ENCODE measurements at regions of chr2 and their contacts with region 1.

Region 1: DNA sequence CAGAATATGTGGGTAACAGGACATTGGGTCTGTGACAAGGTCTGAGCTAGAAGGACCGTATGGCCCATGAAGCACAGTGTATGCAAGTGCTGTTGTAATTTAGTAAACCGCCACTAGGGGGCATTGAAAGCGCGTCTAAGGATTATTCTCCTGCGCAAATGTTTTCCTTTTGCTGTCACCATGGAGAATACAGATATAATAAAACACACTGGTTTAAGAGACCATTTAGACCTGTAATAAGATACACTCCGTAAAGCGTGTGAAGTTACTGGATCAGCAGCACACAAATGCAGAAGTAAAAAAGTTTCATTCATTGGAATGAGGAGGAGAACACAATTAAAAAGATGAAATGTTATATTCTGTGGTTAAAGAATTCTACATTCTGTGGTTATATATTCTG is 272.4 kb downstream of the AGAP1 start:
- DNase-seq: peak; percentile 63
- H3K4me3 Mint-ChIP-seq: no peak overlapping the region
- H3K27ac Mint-ChIP-seq: no peak overlapping the region
- H3K4me1 Mint-ChIP-seq: no peaks in the 10 kb centered on the region
- H3K27me3 Mint-ChIP-seq: no peaks in the 10 kb centered on the region

Region 2: GRCh38 chr2:235779444-235779896 is 13.2 kb after region 1 on chr2:
- CTCF ChIA-PET with region 1: interaction called, 17 read pairs
- DNase-seq: peak; percentile 76
- H3K4me3 Mint-ChIP-seq: no peak overlapping the region
- H3K27ac Mint-ChIP-seq: no peak overlapping the region
- H3K4me1 Mint-ChIP-seq: no peaks in the 10 kb centered on the region
- H3K27me3 Mint-ChIP-seq: peaks cover 12% of the 10 kb centered on the region

Measured in activated naive CD4-positive, alpha-beta T cell treated with anti-CD3 and anti-CD28 coated beads, Interleukin-2, amount 10 ng/mL, durations not matched to agents 7 days and 5 days (primary cell).